Heart right ventricle (tissue), 16 donors: ENCODE measurements at regions of chr9 and their contacts with region 1.

Region 1: DNA sequence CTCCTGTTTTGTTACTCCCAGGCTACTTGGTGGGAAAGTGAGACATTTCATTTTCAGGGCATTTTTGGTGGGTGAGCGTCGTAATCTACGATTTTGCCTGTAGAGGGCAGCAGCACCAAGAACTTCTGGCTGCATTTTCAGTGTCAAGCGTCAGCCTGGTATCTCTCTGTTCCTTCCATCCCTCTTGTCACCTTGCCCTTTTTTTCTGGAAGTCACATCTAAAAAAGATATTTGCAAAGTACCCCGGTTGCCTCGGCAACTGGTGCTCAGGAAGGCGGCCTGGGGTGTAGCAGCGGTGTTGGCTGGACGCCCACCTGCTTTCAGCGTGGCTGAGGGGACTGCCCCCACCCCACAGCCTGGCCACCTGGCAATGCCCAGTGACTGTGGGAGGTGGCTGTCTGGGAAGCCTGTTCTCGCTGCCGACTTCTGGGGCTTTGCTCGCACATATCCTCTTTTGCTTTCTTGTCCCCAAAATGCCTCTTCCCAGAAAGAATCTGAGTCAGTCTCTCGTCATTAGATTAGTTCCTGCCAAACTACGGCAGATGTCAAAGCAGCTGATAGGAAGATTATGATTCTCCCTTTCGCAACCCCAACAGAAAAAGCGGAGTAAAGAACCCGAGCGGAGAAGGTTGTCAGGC is 84.5 kb downstream of the ACER2 start:
- DNase-seq: peak; percentile 73 to 79
- ATAC-seq: peak; percentile 79 to 94 (median 82)
- H3K4me3 ChIP-seq: peak overlapping the region in 7 of 10 donors; percentile 13 to 45 (median 33)
- H3K27ac ChIP-seq: peak overlapping the region in 8 of 10 donors; percentile 18 to 72 (median 57)
- H3K4me1 ChIP-seq: peaks cover 0 to 20% (median 11%) of the 10 kb centered on the region in 9 donors
- H3K27me3 ChIP-seq: peaks cover 0 to 9% (median 0%) of the 10 kb centered on the region in 7 donors
- CTCF ChIP-seq: peak; percentile 56 to 83 (median 73)

Region 2: DNA sequence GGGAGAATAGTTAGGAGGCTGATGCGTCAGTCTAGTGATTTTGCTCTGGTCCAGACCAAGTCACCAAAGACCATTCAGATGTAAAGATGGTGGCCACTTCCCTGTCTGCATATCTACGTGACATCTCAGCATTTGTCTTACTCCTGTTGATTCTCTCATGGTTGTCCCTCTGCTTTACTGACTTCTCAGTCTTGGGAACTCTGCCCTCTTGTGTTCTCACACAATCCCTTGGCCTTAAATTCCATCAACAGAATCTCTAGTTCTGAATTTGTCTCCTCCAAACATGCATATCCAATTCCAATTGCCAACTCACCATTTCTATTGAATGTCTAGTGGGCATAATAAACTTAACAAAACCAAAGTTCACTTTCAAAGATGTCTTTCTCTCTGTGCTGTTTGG is 147.8 kb after region 1 on chr9:
- intact Hi-C with region 1: loop called in 1 of 10 experiments (anchors 5 kb)
- DNase-seq: no peak
- ATAC-seq: no peak
- H3K4me3 ChIP-seq: no peak overlapping the region
- H3K27ac ChIP-seq: no peak overlapping the region
- H3K4me1 ChIP-seq: no peaks in the 10 kb centered on the region
- H3K27me3 ChIP-seq: no peaks in the 10 kb centered on the region
- CTCF ChIP-seq: no peak

Region 3: GRCh38 chr9:19650312-19650711 is 157.0 kb after region 1 on chr9:
- intact Hi-C with region 1: loop called in 1 of 10 experiments (anchors 10 kb)
- DNase-seq: no peak
- ATAC-seq: no peak
- H3K4me3 ChIP-seq: no peak overlapping the region
- H3K27ac ChIP-seq: no peak overlapping the region
- H3K4me1 ChIP-seq: peaks cover 0 to 5% (median 0%) of the 10 kb centered on the region in 9 donors
- H3K27me3 ChIP-seq: no peaks in the 10 kb centered on the region
- CTCF ChIP-seq: no peak

Region 4: DNA sequence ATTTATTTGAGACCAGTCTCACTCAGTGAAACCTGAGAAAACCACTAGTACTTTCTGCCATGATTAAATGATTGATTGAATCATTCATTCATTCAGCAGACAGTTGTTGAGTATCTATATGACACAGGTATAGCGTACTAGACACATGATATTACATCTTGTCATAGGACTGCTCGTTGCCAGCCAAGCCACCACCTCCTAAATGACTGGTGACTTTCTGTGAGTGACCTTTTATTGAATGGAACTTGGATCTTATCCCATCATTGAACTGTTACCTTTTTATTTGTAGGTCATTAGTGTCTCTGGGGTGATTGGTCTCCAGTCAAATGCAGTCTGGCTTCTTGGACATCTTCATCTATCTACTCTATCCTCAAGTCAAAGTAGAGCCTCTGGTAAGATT is 1457.4 kb after region 1 on chr9:
- intact Hi-C with region 1: loop called in 2 of 10 experiments (anchors 5 to 10 kb)
- DNase-seq: no peak
- ATAC-seq: no peak
- H3K4me3 ChIP-seq: no peak overlapping the region
- H3K27ac ChIP-seq: no peak overlapping the region
- H3K4me1 ChIP-seq: no peaks in the 10 kb centered on the region
- H3K27me3 ChIP-seq: no peaks in the 10 kb centered on the region
- CTCF ChIP-seq: no peak